AG04449 (cell line): ENCODE measurements at regions of chr2 and their contacts with region 1.

Region 1: DNA sequence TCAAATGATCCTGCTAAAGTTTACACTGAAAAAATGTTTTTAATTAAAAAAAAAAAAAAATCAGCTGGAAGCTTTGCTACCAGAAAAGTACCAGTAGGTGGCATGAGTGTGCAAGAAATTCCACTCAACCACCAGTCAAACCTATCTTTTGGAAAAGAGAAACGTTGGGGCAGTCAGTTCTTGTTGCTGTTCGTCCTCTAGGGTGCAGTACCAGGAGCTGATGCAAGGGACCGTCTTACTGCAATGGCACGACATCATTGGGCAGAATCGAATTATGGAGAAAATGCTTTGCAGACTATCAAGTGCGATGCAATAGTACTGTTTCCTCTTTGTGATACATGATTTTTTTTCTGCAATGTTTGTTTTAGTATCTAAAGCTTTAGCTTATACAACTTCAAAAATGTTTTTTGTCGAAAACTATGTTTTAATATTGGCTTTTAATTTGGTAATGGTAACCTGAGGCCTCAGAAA is 18.3 kb downstream of the YPEL5 start:
- DNase-seq: peak; percentile 76
- H3K4me3 ChIP-seq: no peak overlapping the region
- CTCF ChIP-seq: peak; percentile 76

Region 2: GRCh38 chr2:30146438-30147147 is 18.5 kb before region 1 on chr2 and contains the start of gene YPEL5:
- CTCF ChIA-PET with region 1: interaction called, 164 read pairs
- POLR2A ChIA-PET with region 1: interaction called, 3 read pairs
- DNase-seq: peak; percentile 97
- H3K4me3 ChIP-seq: peak within 1 kb of the TSS; percentile 82
- CTCF ChIP-seq: no peak

Region 3: GRCh38 chr2:30193104-30193681 is 28.1 kb after region 1 on chr2:
- CTCF ChIA-PET with region 1: interaction called, 25 read pairs
- POLR2A ChIA-PET with region 1: no interaction called
- DNase-seq: no peak
- H3K4me3 ChIP-seq: no peak overlapping the region
- CTCF ChIP-seq: no peak

Region 4: DNA sequence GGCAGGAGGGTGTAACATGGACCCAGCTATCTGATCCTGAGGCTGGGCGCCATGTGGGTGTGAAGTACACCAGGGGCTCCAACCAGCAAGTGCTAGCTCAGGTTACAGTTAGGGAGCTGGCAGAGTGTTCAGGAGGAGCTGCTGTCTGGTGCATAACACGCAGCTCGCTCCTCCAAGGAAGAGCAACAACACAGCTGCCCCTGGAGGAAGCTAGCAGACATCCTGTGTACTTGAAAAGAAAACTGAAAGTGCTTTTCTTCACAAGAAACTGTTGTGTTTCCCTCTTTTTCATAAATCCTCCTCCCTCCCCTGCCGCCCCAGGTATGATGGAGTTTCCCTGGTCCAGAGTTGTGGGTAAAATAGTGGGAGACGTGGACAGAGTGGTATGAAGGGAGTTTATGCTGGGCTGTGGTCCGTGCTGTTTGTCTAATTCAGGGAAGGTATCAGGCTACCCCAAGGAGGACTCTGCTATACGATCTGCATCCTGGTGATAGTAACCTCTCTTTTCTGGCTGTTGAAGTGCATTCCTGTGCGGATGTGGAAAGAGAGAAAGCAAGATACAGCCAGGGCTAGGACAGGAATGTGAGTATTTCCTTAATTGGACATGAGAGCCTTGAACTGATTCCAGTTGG is 60.2 kb after region 1 on chr2:
- CTCF ChIA-PET with region 1: interaction called, 13 read pairs
- POLR2A ChIA-PET with region 1: no interaction called
- DNase-seq: peak; percentile 65
- H3K4me3 ChIP-seq: peak overlapping the region; percentile 53
- CTCF ChIP-seq: no peak

Region 5: GRCh38 chr2:30691948-30692828 is 527.1 kb after region 1 on chr2:
- CTCF ChIA-PET with region 1: interaction called, 21 read pairs
- POLR2A ChIA-PET with region 1: no interaction called
- DNase-seq: no peak
- H3K4me3 ChIP-seq: no peak overlapping the region
- CTCF ChIP-seq: peak; percentile 15